GM10248 (cell line): ENCODE measurements at regions of chr21 and their contacts with region 1.

Region 1: DNA sequence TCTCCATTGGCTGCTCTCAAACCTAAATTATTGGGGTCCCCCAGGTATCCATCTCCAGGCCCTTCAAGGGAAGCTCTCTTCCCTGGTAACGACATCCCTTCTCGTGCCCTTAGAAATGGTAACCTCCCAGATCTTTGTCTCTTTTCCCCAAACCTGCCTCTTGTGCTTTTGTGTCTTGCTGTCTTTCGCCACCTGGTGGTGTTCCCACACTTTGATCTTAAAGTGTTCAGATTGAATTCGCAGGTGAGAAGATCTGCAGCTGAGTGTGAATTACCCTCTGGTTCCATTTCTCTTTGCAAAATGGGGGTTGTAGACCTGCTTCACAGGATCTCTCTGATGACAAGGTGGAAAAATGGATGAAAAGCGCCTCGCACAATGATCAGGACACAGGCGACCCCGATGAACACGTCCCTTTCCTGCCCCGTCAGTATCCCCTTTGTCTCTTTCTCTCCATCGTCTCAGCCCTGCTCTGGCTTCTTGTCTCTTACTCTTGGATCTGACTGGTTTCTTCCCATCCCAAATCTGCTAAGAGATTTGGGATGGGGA is 53.1 kb downstream of the DOP1B start:
- DNase-seq: peak; percentile 55
- CTCF ChIP-seq: peak; percentile 55

Region 2: GRCh38 chr21:35163411-35163810 is 1046.3 kb before region 1 on chr21:
- CTCF ChIA-PET with region 1: no interaction called
- POLR2A ChIA-PET with region 1: no interaction called
- DNase-seq: no peak
- CTCF ChIP-seq: no peak

Region 3: GRCh38 chr21:36149788-36150711 is 59.6 kb before region 1 on chr21:
- CTCF ChIA-PET with region 1: interaction called, 13 read pairs
- POLR2A ChIA-PET with region 1: no interaction called
- DNase-seq: peak; percentile 38
- CTCF ChIP-seq: no peak

Region 4: DNA sequence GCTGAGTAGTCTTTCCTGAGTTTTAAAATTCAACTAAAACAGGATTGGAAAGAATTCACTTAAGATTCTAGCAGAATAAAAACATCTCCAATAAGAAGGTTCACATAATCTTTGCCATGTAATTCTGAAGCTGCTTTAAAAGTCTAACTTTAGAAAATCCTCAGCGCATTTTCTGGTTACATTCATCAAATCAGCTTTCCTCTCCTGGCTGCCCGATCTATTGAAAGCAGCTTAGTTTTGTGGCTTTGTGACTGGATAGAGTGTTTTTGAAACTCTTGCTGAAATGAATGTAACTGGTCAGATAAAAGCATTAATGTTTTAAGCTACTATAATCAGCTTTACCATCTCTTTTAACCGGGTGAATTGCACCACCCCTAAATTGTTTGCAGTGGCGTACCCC is 13.8 kb after region 1 on chr21:
- CTCF ChIA-PET with region 1: interaction called, 13 read pairs
- POLR2A ChIA-PET with region 1: no interaction called
- DNase-seq: no peak
- CTCF ChIP-seq: no peak